ENCODE measurements at regions of chr19 and their contacts with region 1.

Region 1: DNA sequence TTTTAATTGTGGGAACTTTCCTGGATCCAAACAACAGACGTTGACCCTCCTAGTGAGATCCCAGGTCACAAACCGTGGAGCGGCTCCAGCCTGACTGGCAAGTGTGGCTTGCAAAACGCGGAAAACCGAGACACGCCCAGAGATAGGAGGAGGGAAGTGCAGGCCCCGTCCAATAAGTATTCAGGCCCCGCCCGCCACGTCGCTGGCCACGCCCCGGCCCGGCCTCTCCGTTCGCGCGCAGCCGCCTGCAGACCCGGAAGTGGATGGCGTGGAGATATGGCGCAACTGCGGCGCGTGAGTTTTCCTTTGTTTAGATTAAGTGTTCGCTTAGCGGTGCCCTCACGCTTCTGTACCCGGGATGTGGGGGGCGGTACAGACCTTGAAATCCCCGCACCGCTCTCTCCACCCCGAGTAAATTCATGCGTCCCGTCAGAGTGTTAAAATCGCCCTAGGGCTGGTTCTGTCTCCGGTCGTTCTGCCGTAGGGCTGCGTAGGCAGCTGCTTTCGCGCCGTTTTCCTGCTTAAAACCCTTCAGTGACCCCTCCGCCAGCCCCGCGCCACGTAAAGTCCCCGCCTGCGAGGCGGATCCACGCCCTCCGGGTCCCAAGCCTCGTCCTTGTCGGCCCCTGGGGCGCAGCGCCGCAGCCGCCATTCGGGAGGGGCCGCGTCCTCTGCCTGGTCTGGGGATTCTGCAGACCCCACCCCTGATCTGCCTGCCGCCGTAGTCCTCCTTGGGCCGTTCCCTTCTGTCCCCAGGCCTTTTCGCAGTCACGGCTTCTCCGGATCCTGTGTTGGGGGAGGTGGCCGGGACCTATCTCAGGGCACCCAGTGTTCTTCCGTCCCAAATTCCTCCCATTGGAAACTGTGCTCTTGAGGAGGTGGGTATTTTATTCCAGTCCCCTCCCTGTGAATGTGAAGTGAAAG is at the start of gene ZNF766:
- DNase-seq: peak; percentile 98
- ATAC-seq: peak; percentile 99
- H3K4me3 Mint-ChIP-seq: peak within 1 kb of the TSS; percentile 96
- H3K27ac Mint-ChIP-seq: peak within 1 kb of the TSS; percentile 96
- H3K4me1 Mint-ChIP-seq: peaks cover 35% of the 10 kb centered on the region
- H3K27me3 Mint-ChIP-seq: no peaks in the 10 kb centered on the region
- total RNA-seq, gene ZNF766: 28.6 to 34.2 TPM

Region 2: DNA sequence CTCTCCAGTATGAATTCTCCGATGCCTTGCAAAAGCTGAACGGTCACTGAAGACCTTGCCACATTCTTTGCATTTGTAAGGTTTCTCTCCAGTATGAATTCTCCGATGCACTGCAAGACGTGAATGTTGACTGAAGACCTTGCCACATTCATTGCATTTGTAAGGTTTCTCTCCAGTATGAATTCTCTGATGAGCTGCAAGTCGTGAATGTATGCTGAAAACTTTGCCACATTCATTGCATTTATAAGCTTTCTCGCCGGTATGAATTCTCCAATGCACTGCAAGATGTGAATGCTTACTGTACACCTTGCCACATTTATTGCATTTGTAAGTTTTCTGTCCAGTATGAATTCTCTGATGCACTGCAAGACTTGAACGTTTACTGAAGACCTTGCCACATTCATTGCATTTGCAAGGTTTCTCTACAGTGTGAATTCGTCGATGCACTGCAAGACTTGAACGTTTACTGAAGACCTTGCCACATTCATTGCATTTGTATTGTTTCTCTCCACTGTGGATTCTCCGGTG is 154.0 kb before region 1 on chr19:
- CTCF ChIA-PET with region 1: no interaction called
- POLR2A ChIA-PET with region 1: no interaction called
- intact Hi-C with region 1: no loop called
- DNase-seq: no peak
- ATAC-seq: no peak
- H3K4me3 Mint-ChIP-seq: no peak overlapping the region
- H3K27ac Mint-ChIP-seq: no peak overlapping the region
- H3K4me1 Mint-ChIP-seq: no peaks in the 10 kb centered on the region
- H3K27me3 Mint-ChIP-seq: no peaks in the 10 kb centered on the region

Region 3: GRCh38 chr19:52171321-52172169 is 98.1 kb before region 1 on chr19 and contains the start of gene ZNF836:
- CTCF ChIA-PET with region 1: no interaction called
- POLR2A ChIA-PET with region 1: no interaction called
- intact Hi-C with region 1: loop called in 1 of 2 experiments (anchors 1 kb)
- DNase-seq: peak; percentile 96
- ATAC-seq: peak; percentile 96
- H3K4me3 Mint-ChIP-seq: peak within 1 kb of the TSS; percentile 87
- H3K27ac Mint-ChIP-seq: peak within 1 kb of the TSS; percentile 93
- H3K4me1 Mint-ChIP-seq: peaks cover 17% of the 10 kb centered on the region
- H3K27me3 Mint-ChIP-seq: no peaks in the 10 kb centered on the region
- total RNA-seq, gene ZNF836: 10.1 to 11.5 TPM

Region 4: GRCh38 chr19:52296773-52297600 is 27.4 kb after region 1 on chr19 and contains the start of gene ZNF480:
- CTCF ChIA-PET with region 1: no interaction called
- POLR2A ChIA-PET with region 1: no interaction called
- intact Hi-C with region 1: loop called in 1 of 2 experiments (anchors 1 kb)
- DNase-seq: peak; percentile 78
- ATAC-seq: peak; percentile 92
- H3K4me3 Mint-ChIP-seq: peak within 1 kb of the TSS; percentile 90
- H3K27ac Mint-ChIP-seq: peak within 1 kb of the TSS; percentile 98
- H3K4me1 Mint-ChIP-seq: peaks cover 18% of the 10 kb centered on the region
- H3K27me3 Mint-ChIP-seq: no peaks in the 10 kb centered on the region
- total RNA-seq, gene ZNF480: 4.8 to 5.0 TPM

Region 5: GRCh38 chr19:52336117-52336790 is 66.7 kb after region 1 on chr19 and contains the start of gene ZNF610:
- CTCF ChIA-PET with region 1: no interaction called
- POLR2A ChIA-PET with region 1: no interaction called
- intact Hi-C with region 1: loop called in 1 of 2 experiments (anchors 1 kb)
- DNase-seq: peak; percentile 96
- ATAC-seq: peak; percentile 97
- H3K4me3 Mint-ChIP-seq: peak within 1 kb of the TSS; percentile 97
- H3K27ac Mint-ChIP-seq: peak within 1 kb of the TSS; percentile 96
- H3K4me1 Mint-ChIP-seq: peaks cover 10% of the 10 kb centered on the region
- H3K27me3 Mint-ChIP-seq: no peaks in the 10 kb centered on the region
- total RNA-seq, gene ZNF610: 2.3 to 3.3 TPM

Measured in activated CD4-positive, alpha-beta T cell treated with anti-CD3 and anti-CD28 coated beads for 36 hours (primary cell).